Transverse colon (tissue), 4 donors: ENCODE measurements at regions of chr13 and their contacts with region 1.

Region 1: DNA sequence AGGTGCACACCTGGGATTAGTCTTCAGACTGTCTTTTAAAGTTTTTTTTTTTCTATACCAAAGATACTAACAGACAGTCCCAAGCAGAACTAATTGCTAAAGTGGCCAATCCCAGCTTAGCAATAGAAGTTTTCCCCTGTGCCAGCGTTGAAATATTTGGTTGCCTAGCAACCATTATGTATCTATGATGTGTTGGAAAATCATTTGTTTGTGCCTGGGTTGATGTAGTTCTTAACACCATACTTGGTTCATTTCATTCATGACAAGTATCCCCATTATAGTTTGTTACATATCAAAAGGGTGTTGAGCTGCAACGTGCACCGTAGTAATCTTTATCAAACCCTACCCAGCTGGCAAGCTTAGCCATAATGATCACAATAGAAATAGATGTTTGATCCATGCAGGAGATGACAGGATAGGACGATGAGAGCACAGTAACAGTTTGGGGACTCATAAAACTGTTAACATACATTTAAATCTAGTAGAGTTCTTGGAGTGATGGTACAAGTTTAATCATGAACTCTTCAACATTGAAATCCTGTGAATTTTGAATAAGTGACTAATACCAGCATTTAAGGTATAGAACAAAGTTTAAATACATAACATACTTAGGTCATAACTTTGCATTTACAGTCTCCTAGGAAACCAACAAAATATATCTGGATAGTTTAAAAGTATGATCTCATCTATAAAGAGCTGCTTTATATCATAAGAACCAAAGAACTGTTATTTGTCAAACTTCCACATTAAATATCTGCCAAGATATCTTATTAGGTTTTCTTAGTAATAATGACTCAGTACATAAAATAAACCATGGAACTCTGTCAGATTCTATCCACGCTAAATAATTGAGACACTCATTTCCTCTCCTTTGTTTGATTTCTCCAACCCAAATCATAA is 73.4 kb downstream of the MBNL2 start:
- DNase-seq: no peak
- H3K4me3 ChIP-seq: no peak overlapping the region
- H3K27ac ChIP-seq: peak overlapping the region; percentile 0 to 70 (median 56)
- H3K4me1 ChIP-seq: peaks cover 13 to 47% (median 22%) of the 10 kb centered on the region in 4 donors
- H3K27me3 ChIP-seq: no peaks in the 10 kb centered on the region
- CTCF ChIP-seq: no peak
- EP300 ChIP-seq: no peak
- POLR2A ChIP-seq: no peak

Region 2: DNA sequence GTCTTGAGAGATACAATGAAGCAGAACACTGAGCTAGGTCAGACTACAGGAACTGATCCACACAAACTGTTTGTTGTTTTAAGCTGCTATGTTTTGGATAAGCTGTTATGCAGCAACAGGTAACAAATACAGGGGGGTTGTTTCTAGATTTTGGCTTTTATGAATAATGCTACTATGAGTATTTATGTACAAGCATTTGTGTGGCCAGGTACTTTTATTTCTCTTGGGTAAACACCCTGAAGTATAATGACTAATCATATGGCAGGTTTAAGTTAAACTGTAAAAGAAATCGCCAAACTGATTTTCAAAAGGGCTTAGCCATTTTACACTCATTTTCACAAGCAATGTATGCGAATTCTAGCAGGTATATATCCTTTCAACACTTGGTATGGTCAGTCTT is 1452.6 kb before region 1 on chr13:
- in situ Hi-C with region 1: no loop called
- intact Hi-C with region 1: no loop called
- DNase-seq: no peak
- H3K4me3 ChIP-seq: no peak overlapping the region
- H3K27ac ChIP-seq: no peak overlapping the region
- H3K4me1 ChIP-seq: no peaks in the 10 kb centered on the region
- H3K27me3 ChIP-seq: no peaks in the 10 kb centered on the region
- CTCF ChIP-seq: no peak
- EP300 ChIP-seq: no peak
- POLR2A ChIP-seq: no peak

Region 3: GRCh38 chr13:97432917-97433726 is 137.6 kb after region 1 on chr13:
- in situ Hi-C with region 1: no loop called
- intact Hi-C with region 1: loop called (anchors 5 kb)
- DNase-seq: peak; percentile 99
- H3K4me3 ChIP-seq: peak overlapping the region; percentile 46 to 83 (median 78)
- H3K27ac ChIP-seq: peak overlapping the region; percentile 99 to 100 (median 100)
- H3K4me1 ChIP-seq: peaks cover 7 to 46% (median 38%) of the 10 kb centered on the region in 4 donors
- H3K27me3 ChIP-seq: no peaks in the 10 kb centered on the region
- CTCF ChIP-seq: no peak
- EP300 ChIP-seq: no peak
- POLR2A ChIP-seq: no peak

Region 4: DNA sequence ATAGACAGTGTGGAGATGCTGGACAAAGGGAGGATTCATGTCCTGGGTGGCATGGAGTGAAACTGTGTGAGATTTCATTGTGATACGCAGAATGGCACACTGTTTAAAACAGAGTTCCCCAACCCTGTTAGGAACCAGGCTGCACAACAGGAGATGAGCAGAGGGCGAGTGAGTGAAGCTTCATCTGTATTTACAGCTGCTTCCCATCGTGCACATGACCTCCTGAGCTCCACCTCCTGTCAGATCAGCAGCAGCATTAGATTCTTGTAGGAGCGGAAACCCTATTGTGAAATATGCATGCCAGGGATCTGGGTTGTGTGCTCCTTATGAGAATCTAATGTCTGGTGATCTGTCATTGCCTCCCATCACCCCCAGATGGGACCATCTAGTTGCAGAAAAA is 211.0 kb after region 1 on chr13:
- in situ Hi-C with region 1: no loop called
- intact Hi-C with region 1: no loop called
- DNase-seq: no peak
- H3K4me3 ChIP-seq: no peak overlapping the region
- H3K27ac ChIP-seq: no peak overlapping the region
- H3K4me1 ChIP-seq: peaks cover 0 to 11% (median 0%) of the 10 kb centered on the region in 4 donors
- H3K27me3 ChIP-seq: no peaks in the 10 kb centered on the region
- CTCF ChIP-seq: no peak
- EP300 ChIP-seq: no peak
- POLR2A ChIP-seq: no peak